Colonic mucosa (tissue), 4 donors: ENCODE measurements at regions of chr4 and their contacts with region 1.

Region 1: DNA sequence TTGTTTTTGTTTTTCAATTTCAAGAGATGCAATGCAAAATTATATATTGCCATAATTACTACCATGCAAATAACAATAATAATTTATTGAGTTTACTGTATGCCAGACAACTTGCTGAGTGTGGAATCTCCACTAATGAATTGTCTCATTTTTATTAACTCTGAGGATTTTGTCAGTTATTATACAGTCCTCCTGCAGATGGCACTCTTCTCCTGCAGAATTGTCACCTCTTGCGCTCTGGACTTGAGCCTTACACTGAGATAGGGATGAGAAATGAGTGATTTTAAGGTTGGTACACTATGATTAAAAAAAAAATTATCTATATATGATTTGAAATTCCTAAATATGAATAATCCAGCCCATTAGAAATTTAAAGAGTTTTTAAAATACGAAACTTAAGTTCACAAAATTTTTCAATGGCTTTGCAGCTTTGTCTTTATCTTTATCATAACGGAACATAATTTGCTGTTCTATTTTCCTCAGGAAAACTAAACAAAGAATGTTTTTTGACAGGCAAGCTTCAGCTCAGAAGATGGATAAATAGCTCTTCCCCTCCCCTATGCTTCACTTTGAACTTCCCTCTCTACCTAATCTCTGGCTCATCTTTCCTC is 12.7 kb upstream of the PAQR3 start:
- DNase-seq: no peak
- H3K4me3 ChIP-seq: no peak overlapping the region
- H3K27ac ChIP-seq: no peak overlapping the region
- H3K4me1 ChIP-seq: no peaks in the 10 kb centered on the region
- H3K27me3 ChIP-seq: no peaks in the 10 kb centered on the region
- CTCF ChIP-seq: peak; percentile 44

Region 2: GRCh38 chr4:78669453-78669852 is 282.5 kb before region 1 on chr4:
- intact Hi-C with region 1: no loop called
- DNase-seq: no peak
- H3K4me3 ChIP-seq: no peak overlapping the region
- H3K27ac ChIP-seq: no peak overlapping the region
- H3K4me1 ChIP-seq: no peaks in the 10 kb centered on the region
- H3K27me3 ChIP-seq: no peaks in the 10 kb centered on the region
- CTCF ChIP-seq: no peak

Region 3: DNA sequence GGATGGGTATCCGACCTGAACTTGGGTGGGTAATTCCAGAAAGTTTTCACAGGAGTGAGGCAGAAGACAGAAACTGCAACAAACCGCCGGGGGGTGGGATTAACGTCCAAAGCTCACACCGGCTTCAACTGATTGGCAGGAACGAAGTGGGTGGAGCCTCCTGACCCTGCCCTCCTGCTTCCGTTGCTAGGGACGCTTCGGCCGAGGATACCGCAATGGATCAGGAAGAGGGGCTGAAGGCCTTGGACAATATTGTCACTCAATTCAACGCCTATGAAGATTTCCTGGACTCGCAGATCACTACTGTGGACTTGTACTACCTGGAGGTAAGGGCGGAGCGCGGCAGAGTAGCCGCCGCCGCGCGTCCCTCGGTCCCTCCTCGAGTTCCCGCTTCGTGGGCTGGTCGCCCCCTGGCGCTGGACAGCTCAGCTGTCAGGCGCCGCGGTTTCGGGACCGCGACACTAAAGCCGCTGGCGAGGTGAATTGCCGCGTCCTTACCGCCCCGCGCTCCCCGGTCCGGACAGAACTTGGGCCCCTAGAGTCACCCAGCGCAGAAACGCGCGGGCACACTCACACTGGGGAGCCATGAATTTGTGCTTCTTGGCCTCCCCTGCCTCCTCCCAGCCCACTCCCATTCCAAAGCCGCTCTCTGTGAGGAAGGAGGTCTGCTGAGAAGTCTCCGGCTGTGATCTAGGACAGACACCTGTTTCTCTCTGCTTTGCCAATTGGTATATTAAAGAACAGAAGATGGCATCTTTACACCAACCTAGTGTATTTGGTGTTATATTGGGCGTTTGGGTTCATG is 1383.8 kb after region 1 on chr4 and contains the start of gene CFAP299:
- intact Hi-C with region 1: loop called (anchors 5 kb)
- DNase-seq: peak; percentile 92
- H3K4me3 ChIP-seq: peak within 1 kb of the TSS; percentile 39
- H3K27ac ChIP-seq: no peak within 1 kb of the TSS
- H3K4me1 ChIP-seq: no peaks in the 10 kb centered on the region
- H3K27me3 ChIP-seq: no peaks in the 10 kb centered on the region
- CTCF ChIP-seq: peak; percentile 22
- total RNA-seq, gene CFAP299: not detected